ENCODE measurements at regions of chr12 and their contacts with region 1.

Region 1: DNA sequence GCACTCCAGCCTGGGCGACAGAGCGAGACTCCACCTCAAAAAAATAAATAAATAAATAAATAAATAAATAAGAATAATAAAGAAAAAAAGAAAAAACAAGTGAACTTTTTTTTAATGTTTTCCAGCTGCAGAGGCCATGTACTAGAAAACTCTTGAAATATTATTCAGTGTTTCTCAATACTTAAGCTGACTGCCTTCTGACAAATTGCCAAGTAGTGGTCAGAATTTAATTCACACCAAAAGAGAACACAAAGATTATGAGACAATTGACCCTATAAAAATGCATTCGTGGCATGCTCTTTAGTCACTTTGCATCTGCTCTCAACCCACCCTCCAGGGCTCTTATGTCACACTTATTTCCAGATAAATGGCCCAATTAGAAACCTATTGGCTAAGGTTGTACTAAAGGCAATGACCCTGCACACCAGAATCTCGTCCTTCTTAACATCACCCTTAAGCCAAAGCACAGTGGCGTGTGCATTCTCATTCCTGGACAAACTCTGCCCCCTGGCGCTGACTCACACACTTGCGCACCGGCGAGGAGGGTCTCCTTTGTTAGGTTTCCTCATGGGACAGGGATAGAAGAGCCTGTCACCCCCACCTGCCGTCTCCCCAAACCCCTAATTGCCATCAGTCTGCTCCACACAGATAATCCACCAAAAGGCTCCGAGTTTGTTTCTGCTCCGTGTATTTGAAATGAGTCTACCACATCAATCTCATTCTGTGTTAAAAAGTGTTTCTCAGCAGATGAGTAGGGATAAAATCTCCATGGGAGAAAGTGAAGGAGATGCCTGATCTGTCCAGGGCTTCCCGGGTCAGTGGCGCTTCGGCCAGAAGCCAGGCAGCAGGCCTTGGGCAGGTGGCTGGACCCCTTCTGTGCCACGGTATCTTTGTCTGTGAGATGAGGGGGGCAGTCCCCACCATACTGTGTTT is 73.1 kb upstream of the CEP83 start:
- DNase-seq: peak; percentile 83
- H3K4me3 Mint-ChIP-seq: no peak overlapping the region
- H3K27ac Mint-ChIP-seq: no peak overlapping the region
- H3K4me1 Mint-ChIP-seq: no peaks in the 10 kb centered on the region
- H3K27me3 Mint-ChIP-seq: no peaks in the 10 kb centered on the region

Region 2: GRCh38 chr12:93813972-93814821 is 718.6 kb before region 1 on chr12:
- CTCF ChIA-PET with region 1: no interaction called
- intact Hi-C with region 1: no loop called
- DNase-seq: peak; percentile 30
- H3K4me3 Mint-ChIP-seq: no peak overlapping the region
- H3K27ac Mint-ChIP-seq: no peak overlapping the region
- H3K4me1 Mint-ChIP-seq: peaks cover 6% of the 10 kb centered on the region
- H3K27me3 Mint-ChIP-seq: no peaks in the 10 kb centered on the region

Region 3: GRCh38 chr12:94133964-94134795 is 398.6 kb before region 1 on chr12:
- CTCF ChIA-PET with region 1: interaction called, 22 read pairs
- intact Hi-C with region 1: loop called (anchors 1 kb)
- DNase-seq: peak; percentile 53
- H3K4me3 Mint-ChIP-seq: no peak overlapping the region
- H3K27ac Mint-ChIP-seq: no peak overlapping the region
- H3K4me1 Mint-ChIP-seq: peaks cover 4% of the 10 kb centered on the region
- H3K27me3 Mint-ChIP-seq: no peaks in the 10 kb centered on the region

Region 4: DNA sequence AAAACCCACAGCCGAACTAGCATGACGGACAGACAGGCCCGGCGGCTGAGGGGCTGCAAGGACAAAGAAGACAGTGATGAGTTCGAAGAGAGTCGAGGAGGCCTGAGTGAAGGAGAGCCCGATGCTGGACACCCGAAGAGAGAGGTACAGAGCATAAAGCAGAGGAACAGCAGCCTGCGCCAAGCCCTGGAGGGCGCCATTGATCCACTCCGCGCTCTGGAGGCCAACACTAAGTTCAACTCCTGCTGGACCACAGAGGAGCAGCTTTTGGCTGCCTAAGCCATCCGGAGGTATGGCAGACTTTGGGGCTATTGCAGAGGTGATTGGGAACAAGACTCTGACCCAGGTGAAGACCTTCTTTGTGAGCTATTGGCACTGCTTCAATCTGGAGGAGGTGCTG is 392.2 kb before region 1 on chr12:
- CTCF ChIA-PET with region 1: interaction called, 22 read pairs
- intact Hi-C with region 1: loop called (anchors 1 kb)
- DNase-seq: peak; percentile 61
- H3K4me3 Mint-ChIP-seq: no peak overlapping the region
- H3K27ac Mint-ChIP-seq: no peak overlapping the region
- H3K4me1 Mint-ChIP-seq: no peaks in the 10 kb centered on the region
- H3K27me3 Mint-ChIP-seq: no peaks in the 10 kb centered on the region

Region 5: GRCh38 chr12:94435511-94435927 is 97.2 kb before region 1 on chr12:
- CTCF ChIA-PET with region 1: no interaction called
- intact Hi-C with region 1: loop called (anchors 2 kb)
- DNase-seq: no peak
- H3K4me3 Mint-ChIP-seq: no peak overlapping the region
- H3K27ac Mint-ChIP-seq: no peak overlapping the region
- H3K4me1 Mint-ChIP-seq: peaks cover 34% of the 10 kb centered on the region
- H3K27me3 Mint-ChIP-seq: no peaks in the 10 kb centered on the region

Region 6: GRCh38 chr12:94571556-94571955 is 38.8 kb after region 1 on chr12:
- CTCF ChIA-PET with region 1: no interaction called
- intact Hi-C with region 1: no loop called
- DNase-seq: no peak
- H3K4me3 Mint-ChIP-seq: no peak overlapping the region
- H3K27ac Mint-ChIP-seq: no peak overlapping the region
- H3K4me1 Mint-ChIP-seq: peaks cover 2% of the 10 kb centered on the region
- H3K27me3 Mint-ChIP-seq: peaks cover 6% of the 10 kb centered on the region

Measured in activated naive CD4-positive, alpha-beta T cell treated with anti-CD3 and anti-CD28 coated beads for 36 hours (primary cell).